Activated CD8-positive, alpha-beta T cell treated with anti-CD3 and anti-CD28 coated beads for 36 hours (primary cell): ENCODE measurements at regions of chr1 and their contacts with region 1.

Region 1: GRCh38 chr1:231364192-231364591 is 26.1 kb downstream of the SPRTN start:
- DNase-seq: no peak
- ATAC-seq: no peak
- H3K4me3 Mint-ChIP-seq: no peak overlapping the region
- H3K27ac Mint-ChIP-seq: peak overlapping the region; percentile 1
- H3K4me1 Mint-ChIP-seq: peaks cover 3% of the 10 kb centered on the region
- H3K27me3 Mint-ChIP-seq: no peaks in the 10 kb centered on the region
- CTCF ChIP-seq: no peak

Region 2: GRCh38 chr1:231421993-231422764 is 58.0 kb after region 1 on chr1 and contains the start of gene EGLN1:
- CTCF ChIA-PET with region 1: interaction called, 5 read pairs
- POLR2A ChIA-PET with region 1: interaction called, 3 read pairs
- intact Hi-C with region 1: loop called (anchors 5 kb)
- DNase-seq: peak; percentile 84
- ATAC-seq: peak; percentile 83
- H3K4me3 Mint-ChIP-seq: peak within 1 kb of the TSS; percentile 94
- H3K27ac Mint-ChIP-seq: peak within 1 kb of the TSS; percentile 92
- H3K4me1 Mint-ChIP-seq: peaks cover 30% of the 10 kb centered on the region
- H3K27me3 Mint-ChIP-seq: peaks cover 4% of the 10 kb centered on the region
- CTCF ChIP-seq: no peak
- total RNA-seq, gene EGLN1: 46.5 to 47.2 TPM

Region 3: GRCh38 chr1:231590453-231591198 is 226.4 kb after region 1 on chr1:
- CTCF ChIA-PET with region 1: interaction called, 11 read pairs
- POLR2A ChIA-PET with region 1: no interaction called
- intact Hi-C with region 1: no loop called
- DNase-seq: peak; percentile 60
- ATAC-seq: peak; percentile 75
- H3K4me3 Mint-ChIP-seq: no peak overlapping the region
- H3K27ac Mint-ChIP-seq: no peak overlapping the region
- H3K4me1 Mint-ChIP-seq: peaks cover 4% of the 10 kb centered on the region
- H3K27me3 Mint-ChIP-seq: no peaks in the 10 kb centered on the region
- CTCF ChIP-seq: peak; percentile 68

Region 4: DNA sequence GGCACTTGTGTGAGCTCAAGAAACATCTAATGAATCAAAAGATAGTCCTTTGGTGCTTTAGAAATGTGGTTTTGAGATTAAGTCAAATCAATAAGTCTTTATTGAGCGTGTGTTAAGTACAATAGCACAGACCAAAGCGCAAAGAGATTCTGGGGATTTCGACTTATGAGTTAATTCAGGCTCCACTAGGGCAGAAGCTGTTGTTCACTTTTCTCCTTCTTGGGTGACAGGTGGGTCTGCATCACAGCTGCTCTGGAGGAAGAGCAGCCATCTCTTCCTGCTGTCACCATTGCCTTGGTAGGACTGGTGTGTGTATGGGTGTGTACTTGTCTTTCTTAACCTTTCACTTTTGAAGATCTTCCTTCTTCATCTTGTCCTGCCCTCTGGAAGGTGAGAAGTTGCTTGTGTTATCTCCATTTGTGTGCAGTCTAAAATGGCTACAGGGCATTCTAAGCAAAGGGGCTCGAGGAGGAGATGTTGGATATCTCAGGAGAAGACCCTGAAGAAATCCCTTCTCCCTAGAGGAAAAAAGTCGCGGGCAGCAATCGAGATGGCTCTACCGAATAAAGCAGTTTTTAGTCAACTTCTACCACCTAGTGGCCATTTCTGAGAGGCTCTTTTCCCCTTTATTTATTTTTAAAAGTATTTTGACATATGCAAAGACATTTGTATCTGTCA is 239.5 kb after region 1 on chr1:
- CTCF ChIA-PET with region 1: interaction called, 14 read pairs
- POLR2A ChIA-PET with region 1: no interaction called
- intact Hi-C with region 1: loop called (anchors 5 kb)
- DNase-seq: peak; percentile 45
- ATAC-seq: peak; percentile 84
- H3K4me3 Mint-ChIP-seq: peak overlapping the region; percentile 87
- H3K27ac Mint-ChIP-seq: peak overlapping the region; percentile 86
- H3K4me1 Mint-ChIP-seq: peaks cover 7% of the 10 kb centered on the region
- H3K27me3 Mint-ChIP-seq: no peaks in the 10 kb centered on the region
- CTCF ChIP-seq: peak; percentile 83